Endothelial cell of umbilical vein (primary cell): ENCODE measurements at regions of chr17 and their contacts with region 1.

Region 1: GRCh38 chr17:60599620-60600489 is at the start of gene PPM1D:
- DNase-seq: peak; percentile 100
- H3K4me3 ChIP-seq: peak within 1 kb of the TSS; percentile 81 to 98 (median 96)
- H3K27ac ChIP-seq: peak within 1 kb of the TSS; percentile 95
- H3K4me1 ChIP-seq: peaks cover 15% of the 10 kb centered on the region
- H3K27me3 ChIP-seq: no peaks in the 10 kb centered on the region
- CTCF ChIP-seq: no peak
- POLR2A ChIP-seq: peak; percentile 97
- total RNA-seq, gene PPM1D: 18.6 and 19.0 TPM in 2 replicates

Region 2: DNA sequence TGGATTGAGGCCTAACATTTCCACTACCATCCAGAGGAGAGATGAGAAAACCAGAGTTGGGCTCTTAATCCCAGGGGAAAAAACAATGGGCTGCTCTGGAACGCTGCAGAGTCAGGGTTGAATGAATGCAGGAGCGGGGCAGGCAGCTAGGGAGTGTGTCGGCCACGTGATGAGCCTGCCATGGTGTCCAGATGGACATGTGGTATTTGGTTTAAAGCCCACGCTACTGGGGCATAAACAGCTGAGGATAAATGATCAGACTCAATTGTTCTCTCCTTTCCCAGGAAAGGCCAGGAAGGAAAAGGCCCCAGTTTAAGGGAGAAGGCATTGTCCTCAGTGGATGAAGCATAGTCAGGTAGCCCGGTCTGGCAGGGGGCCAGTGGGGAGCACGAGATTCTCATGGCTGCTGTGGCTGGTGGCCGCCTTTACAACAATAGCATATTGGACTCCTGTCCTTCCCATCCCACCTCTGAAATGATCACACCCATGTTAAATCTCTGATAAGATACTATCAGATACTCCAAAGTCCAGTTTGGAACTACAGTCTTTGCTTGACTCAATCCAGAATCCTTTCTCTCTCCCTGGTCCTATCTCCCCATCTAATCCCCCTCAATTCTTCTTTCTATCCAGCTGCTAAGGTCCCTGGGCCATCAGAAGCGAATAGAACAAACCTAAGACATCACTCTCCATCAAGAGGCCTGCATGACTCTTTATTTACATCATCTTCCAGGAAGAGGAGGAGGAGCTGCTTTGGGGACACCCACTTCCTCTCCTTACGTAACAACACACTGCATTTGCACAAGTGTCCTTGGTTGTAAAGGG is 429.7 kb before region 1 on chr17:
- CTCF ChIA-PET with region 1: no interaction called
- POLR2A ChIA-PET with region 1: no interaction called
- dilution Hi-C with region 1: no loop called
- intact Hi-C with region 1: no loop called
- DNase-seq: peak; percentile 94
- H3K4me3 ChIP-seq: no peak overlapping the region
- H3K27ac ChIP-seq: peak overlapping the region; percentile 48
- H3K4me1 ChIP-seq: peaks cover 20% of the 10 kb centered on the region
- H3K27me3 ChIP-seq: no peaks in the 10 kb centered on the region
- CTCF ChIP-seq: no peak
- POLR2A ChIP-seq: peak; percentile 33

Region 3: GRCh38 chr17:60525685-60526514 is 74.0 kb before region 1 on chr17 and contains the start of gene APPBP2:
- CTCF ChIA-PET with region 1: interaction called, 4 read pairs
- POLR2A ChIA-PET with region 1: interaction called, 5 read pairs
- dilution Hi-C with region 1: no loop called
- intact Hi-C with region 1: loop called (anchors 1 kb)
- DNase-seq: peak; percentile 90
- H3K4me3 ChIP-seq: peak within 1 kb of the TSS; percentile 71 to 94 (median 91)
- H3K27ac ChIP-seq: peak within 1 kb of the TSS; percentile 86
- H3K4me1 ChIP-seq: peaks cover 11% of the 10 kb centered on the region
- H3K27me3 ChIP-seq: no peaks in the 10 kb centered on the region
- CTCF ChIP-seq: no peak
- POLR2A ChIP-seq: peak; percentile 97
- total RNA-seq, gene APPBP2: 42.0 and 49.1 TPM in 2 replicates

Region 4: GRCh38 chr17:60577147-60577915 is 22.5 kb before region 1 on chr17:
- CTCF ChIA-PET with region 1: interaction called, 162 read pairs
- POLR2A ChIA-PET with region 1: interaction called, 24 read pairs
- dilution Hi-C with region 1: no loop called
- intact Hi-C with region 1: loop called (anchors 1 kb)
- DNase-seq: peak; percentile 67
- H3K4me3 ChIP-seq: peak overlapping the region in 2 of 3 experiments; percentile 5 to 10
- H3K27ac ChIP-seq: peak overlapping the region; percentile 3
- H3K4me1 ChIP-seq: peaks cover 21% of the 10 kb centered on the region
- H3K27me3 ChIP-seq: no peaks in the 10 kb centered on the region
- CTCF ChIP-seq: no peak
- POLR2A ChIP-seq: no peak

Region 5: GRCh38 chr17:60630352-60630751 is 30.5 kb after region 1 on chr17:
- CTCF ChIA-PET with region 1: interaction called, 13 read pairs
- POLR2A ChIA-PET with region 1: interaction called, 7 read pairs
- dilution Hi-C with region 1: no loop called
- intact Hi-C with region 1: no loop called
- DNase-seq: peak; percentile 89
- H3K4me3 ChIP-seq: no peak overlapping the region
- H3K27ac ChIP-seq: peak overlapping the region; percentile 34
- H3K4me1 ChIP-seq: peaks cover 8% of the 10 kb centered on the region
- H3K27me3 ChIP-seq: no peaks in the 10 kb centered on the region
- CTCF ChIP-seq: no peak
- POLR2A ChIP-seq: no peak

Region 6: GRCh38 chr17:60646749-60647148 is 46.9 kb after region 1 on chr17:
- CTCF ChIA-PET with region 1: no interaction called
- POLR2A ChIA-PET with region 1: no interaction called
- dilution Hi-C with region 1: no loop called
- intact Hi-C with region 1: no loop called
- DNase-seq: no peak
- H3K4me3 ChIP-seq: no peak overlapping the region
- H3K27ac ChIP-seq: no peak overlapping the region
- H3K4me1 ChIP-seq: peaks cover 3% of the 10 kb centered on the region
- H3K27me3 ChIP-seq: no peaks in the 10 kb centered on the region
- CTCF ChIP-seq: no peak
- POLR2A ChIP-seq: no peak

Region 7: DNA sequence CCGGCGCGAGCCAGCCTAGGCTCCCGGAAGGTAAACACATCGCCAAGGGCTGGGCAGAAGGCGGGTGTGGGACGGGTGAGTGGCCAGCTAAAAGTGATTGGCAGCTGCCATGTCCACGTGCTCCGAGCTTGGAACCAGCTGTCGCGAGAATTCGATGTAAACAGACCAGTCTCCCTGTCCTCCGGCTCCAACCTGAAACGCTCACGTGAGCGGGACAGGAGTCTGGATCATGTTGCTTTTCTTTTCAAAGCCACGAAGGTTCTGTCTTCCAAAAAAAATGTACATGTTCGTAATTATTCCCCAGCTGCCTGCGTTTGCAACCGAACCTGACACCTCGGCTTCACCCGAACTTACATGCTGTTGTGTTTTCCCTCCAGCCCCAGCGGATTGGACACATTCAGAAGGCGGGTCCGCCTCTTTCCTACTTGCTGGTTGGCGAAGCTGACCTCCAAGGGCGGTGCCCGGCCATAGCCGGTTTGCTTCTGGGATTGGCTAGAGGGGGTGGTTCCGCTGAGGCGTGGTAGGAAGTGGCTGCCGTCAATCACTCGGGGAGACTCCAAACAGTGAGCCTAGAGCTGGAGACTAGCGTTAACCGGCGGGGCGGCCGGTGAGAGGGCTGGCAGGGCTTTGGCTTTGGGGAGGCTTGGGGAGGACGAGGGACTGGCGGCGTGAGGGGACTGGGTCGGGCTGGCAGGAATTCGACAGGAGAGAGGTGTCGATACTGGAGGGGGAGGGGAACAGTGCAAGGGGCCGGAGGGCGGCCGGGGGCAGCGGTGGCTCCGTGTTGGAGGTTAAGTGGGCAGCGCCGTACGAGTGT is 77.7 kb after region 1 on chr17 and contains the start of gene BCAS3:
- CTCF ChIA-PET with region 1: no interaction called
- POLR2A ChIA-PET with region 1: interaction called, 3 read pairs
- dilution Hi-C with region 1: no loop called
- intact Hi-C with region 1: loop called (anchors 1 kb)
- DNase-seq: peak; percentile 99
- H3K4me3 ChIP-seq: peak within 1 kb of the TSS; percentile 57 to 76 (median 65)
- H3K27ac ChIP-seq: peak within 1 kb of the TSS; percentile 0
- H3K4me1 ChIP-seq: peaks cover 7% of the 10 kb centered on the region
- H3K27me3 ChIP-seq: no peaks in the 10 kb centered on the region
- CTCF ChIP-seq: no peak
- POLR2A ChIP-seq: peak; percentile 83
- total RNA-seq, gene BCAS3: 16.0 and 24.3 TPM in 2 replicates

Region 8: DNA sequence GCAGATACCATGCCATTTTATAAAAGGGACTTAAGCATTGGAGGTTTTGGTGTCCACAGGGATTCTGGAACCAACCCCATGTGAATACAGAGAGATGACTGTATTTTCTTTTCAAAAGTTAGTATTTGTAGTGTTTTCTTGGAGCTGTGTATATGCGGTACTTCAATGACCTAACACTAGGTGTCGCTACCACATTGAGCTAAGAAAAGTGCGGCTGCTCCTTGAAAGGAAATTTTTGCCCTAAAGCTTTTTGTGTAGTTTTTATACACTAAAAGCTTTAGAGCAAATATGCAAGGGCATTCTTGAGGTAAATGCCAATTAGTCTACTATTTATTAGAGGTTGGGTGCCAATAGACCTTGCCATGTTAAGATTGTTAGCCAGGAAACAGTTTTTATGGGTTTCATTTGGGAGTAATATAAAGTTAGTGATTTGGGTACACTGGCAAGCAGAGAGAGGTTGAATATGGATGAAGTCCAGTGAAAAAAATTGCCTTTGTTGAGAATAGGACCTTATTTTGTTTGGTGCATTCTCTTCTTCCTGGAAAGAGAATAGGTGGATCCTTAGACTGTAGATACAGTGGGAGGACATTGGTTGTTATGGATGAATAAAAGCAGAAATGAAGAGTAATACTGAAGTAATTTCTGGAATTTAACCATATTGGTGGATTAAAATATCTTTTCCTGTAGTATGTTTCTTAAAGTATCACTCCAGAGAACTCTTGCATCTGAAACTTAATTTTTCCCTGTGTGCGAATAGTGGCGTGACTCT is 121.1 kb after region 1 on chr17:
- CTCF ChIA-PET with region 1: no interaction called
- POLR2A ChIA-PET with region 1: no interaction called
- dilution Hi-C with region 1: no loop called
- intact Hi-C with region 1: no loop called
- DNase-seq: peak; percentile 68
- H3K4me3 ChIP-seq: no peak overlapping the region
- H3K27ac ChIP-seq: no peak overlapping the region
- H3K4me1 ChIP-seq: no peaks in the 10 kb centered on the region
- H3K27me3 ChIP-seq: no peaks in the 10 kb centered on the region
- CTCF ChIP-seq: peak; percentile 73 to 76
- POLR2A ChIP-seq: no peak